ENCODE measurements at regions of chr4 and their contacts with region 1.

Region 1: GRCh38 chr4:153083447-153083947 is 120.7 kb upstream of the TRIM2 start:
- DNase-seq: peak; percentile 35
- ATAC-seq: peak; percentile 85

Region 2: DNA sequence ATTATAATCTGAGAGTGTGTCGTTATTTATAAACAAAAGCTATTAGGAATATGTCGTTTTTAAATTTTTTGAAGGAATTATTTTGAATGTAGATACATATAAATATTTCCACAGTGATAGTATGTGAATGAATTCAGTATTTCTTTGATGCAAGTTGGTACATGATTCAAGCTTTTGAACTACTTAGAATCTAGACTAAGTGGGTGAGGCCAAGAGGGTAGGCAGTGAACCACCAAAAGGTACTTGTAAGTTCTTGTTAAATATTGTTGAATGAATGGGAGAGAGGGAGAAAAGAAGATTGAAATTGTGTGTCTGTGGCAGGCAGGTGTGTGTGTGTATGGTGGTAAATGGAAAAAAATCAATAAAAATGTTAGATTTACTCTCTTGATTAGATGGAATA is 234.1 kb before region 1 on chr4:
- intact Hi-C with region 1: loop called (anchors 5 kb)
- DNase-seq: no peak
- ATAC-seq: no peak

Region 3: GRCh38 chr4:153127760-153128494 is 44.4 kb after region 1 on chr4:
- intact Hi-C with region 1: loop called (anchors 1 kb)
- DNase-seq: peak; percentile 80
- ATAC-seq: peak; percentile 89